Posterior vena cava (tissue), 2 donors: ENCODE measurements at regions of chr2 and their contacts with region 1.

Region 1: GRCh38 chr2:42095923-42096408 is 48.1 kb downstream of the PKDCC start:
- DNase-seq: peak; percentile 91

Region 2: GRCh38 chr2:42238644-42239288 is 142.8 kb after region 1 on chr2:
- intact Hi-C with region 1: loop called (anchors 10 kb)
- DNase-seq: no peak

Region 3: GRCh38 chr2:42328148-42328833 is 232.3 kb after region 1 on chr2:
- intact Hi-C with region 1: loop called (anchors 5 kb)
- DNase-seq: no peak

Region 4: DNA sequence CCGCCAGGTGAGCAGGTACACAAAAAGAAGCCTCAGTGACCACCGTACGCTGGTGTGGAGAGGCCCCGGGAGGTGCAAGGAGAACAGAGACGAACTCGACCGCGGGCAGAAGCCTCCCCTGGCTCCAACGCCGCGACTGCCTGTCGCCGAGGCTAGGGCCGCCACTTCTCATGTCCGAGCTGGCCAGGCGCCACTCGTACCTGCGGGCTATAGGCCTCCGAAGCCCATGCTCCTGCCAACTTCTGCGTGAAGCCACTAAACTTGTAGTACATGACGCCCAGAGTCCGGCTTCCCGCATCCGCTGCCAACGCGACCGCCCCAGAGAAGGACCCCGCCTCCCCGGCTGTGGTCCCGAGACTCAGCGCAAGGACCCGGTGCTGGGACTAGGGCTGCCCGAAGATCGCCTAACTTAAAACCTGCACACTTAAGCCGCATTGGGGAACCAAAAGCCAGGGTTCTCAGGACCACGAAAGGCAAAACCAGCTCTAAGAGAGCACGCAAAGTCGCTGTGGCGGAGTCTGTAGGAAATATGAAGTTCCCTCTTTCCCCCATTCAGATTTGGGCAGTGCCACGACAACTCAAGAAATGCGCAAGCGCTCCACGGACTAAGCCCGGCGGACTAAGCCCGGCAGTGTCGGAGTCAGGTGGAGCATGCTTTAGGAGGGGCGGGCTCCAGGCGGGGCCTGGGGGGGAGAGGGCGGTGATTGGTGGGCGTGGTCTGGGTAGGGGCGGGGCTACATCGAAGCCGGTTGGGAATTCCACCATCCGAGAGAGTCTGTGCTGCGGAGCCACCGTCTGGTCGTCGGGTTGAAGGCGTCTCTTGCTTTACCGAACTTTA is 265.1 kb after region 1 on chr2 and contains the start of gene COX7A2L:
- intact Hi-C with region 1: loop called in 1 of 2 experiments (anchors 5 kb)
- DNase-seq: peak; percentile 99
- total RNA-seq, gene COX7A2L: 58.1 to 58.7 TPM